ENCODE measurements at regions of chr2 and their contacts with region 1.

Region 1: GRCh38 chr2:215356948-215357461 is 45.1 kb downstream of the ATIC start:
- DNase-seq: no peak
- ATAC-seq: no peak
- H3K4me3 ChIP-seq: no peak overlapping the region
- H3K27ac ChIP-seq: no peak overlapping the region
- H3K4me1 ChIP-seq: no peaks in the 10 kb centered on the region
- H3K27me3 ChIP-seq: no peaks in the 10 kb centered on the region
- CTCF ChIP-seq: no peak
- EP300 ChIP-seq: no peak
- POLR2A ChIP-seq: no peak
- RAD21 ChIP-seq: no peak

Region 2: DNA sequence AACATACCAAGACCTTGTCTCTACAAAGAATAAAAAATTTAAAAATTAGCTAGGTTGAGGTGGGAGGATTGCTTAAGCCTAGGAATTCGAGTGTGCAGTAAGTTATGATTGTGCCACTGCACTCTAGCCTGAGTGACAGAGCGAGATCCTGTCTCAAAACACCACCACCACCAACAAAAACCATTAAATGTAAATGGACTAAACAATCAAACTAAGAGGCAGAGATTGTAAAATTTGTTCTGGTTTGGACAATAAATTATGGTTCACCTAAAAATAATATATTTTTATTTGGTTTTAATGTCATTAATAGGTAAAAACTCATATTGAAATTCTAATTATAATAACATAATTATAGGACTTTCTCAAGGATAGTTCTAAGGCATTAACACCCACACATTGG is 55.0 kb before region 1 on chr2:
- CTCF ChIA-PET with region 1: no interaction called
- POLR2A ChIA-PET with region 1: no interaction called
- RAD21 ChIA-PET with region 1: no interaction called
- SMC1A ChIA-PET with region 1: no interaction called
- in situ Hi-C with region 1: no loop called
- intact Hi-C with region 1: no loop called
- DNase-seq: no peak
- ATAC-seq: no peak
- H3K4me3 ChIP-seq: no peak overlapping the region
- H3K27ac ChIP-seq: no peak overlapping the region
- H3K4me1 ChIP-seq: no peaks in the 10 kb centered on the region
- H3K27me3 ChIP-seq: no peaks in the 10 kb centered on the region
- CTCF ChIP-seq: no peak
- EP300 ChIP-seq: no peak
- POLR2A ChIP-seq: no peak
- RAD21 ChIP-seq: no peak

Region 3: DNA sequence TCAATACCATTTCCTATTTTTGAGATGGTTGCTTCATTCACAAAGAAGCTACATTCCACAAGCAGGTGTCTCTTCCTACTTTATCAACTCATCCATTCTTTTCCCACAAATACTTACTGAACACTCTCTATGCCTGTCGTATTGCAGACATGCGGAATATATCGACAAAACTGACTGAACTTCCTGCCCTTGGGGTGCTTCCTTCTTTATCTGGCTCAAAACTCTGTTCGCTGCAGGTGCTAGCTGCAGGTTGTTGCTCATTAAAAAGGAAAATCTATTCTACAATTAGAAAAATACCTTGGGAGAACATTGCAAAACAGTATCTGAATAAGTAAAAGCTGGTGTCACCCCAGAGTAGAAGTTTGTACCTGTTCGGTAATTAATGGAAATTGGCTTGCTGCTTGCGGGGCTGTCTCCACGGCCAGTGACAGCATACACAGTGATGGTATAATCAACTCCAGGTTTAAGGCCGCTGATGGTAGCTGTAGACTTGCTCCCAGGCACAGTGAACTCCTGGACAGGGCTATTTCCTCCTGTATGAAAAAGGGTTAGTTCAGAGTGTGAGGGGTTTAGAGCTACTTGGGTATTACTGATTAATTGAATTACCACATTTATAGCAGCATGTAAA is 26.8 kb after region 1 on chr2:
- CTCF ChIA-PET with region 1: no interaction called
- POLR2A ChIA-PET with region 1: no interaction called
- RAD21 ChIA-PET with region 1: no interaction called
- SMC1A ChIA-PET with region 1: no interaction called
- in situ Hi-C with region 1: no loop called
- intact Hi-C with region 1: loop called (anchors 1 kb)
- DNase-seq: no peak
- ATAC-seq: no peak
- H3K4me3 ChIP-seq: no peak overlapping the region
- H3K27ac ChIP-seq: no peak overlapping the region
- H3K4me1 ChIP-seq: no peaks in the 10 kb centered on the region
- H3K27me3 ChIP-seq: no peaks in the 10 kb centered on the region
- CTCF ChIP-seq: no peak
- EP300 ChIP-seq: no peak
- POLR2A ChIP-seq: no peak
- RAD21 ChIP-seq: no peak

Measured in GM12878 (cell line).